ENCODE measurements at regions of chr19 and their contacts with region 1.

Region 1: GRCh38 chr19:18401580-18402112 is 4.2 kb upstream of the LRRC25 start:
- DNase-seq: peak; percentile 99

Region 2: DNA sequence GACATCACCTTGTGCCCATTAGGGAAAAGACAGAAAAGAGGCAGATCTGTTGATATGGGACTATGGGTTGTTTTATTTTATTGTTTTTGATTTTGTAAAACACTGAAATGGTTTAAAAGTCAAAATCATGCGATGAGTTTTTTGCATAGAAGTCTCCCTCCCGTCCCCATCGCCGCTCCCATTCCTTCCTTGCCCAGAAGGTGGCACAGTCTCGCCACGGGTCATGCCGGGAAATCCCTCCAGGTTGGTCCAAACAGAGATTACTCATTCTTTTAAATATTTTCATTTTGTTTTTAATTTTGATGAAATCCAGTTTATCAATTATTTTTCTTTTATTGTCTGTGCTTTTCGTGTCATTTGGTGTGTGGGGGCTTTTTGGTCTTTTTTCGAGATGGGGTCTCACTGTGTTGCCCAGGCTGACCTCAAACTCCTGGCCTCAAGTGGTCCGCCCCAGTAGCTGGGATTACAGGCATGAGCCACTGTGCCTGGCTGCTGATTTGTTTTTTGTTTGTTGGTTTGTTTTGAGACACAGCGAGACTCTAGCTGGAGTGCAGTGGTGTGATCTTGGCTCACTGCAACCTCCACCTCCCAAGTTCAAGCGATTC is 52.0 kb before region 1 on chr19:
- in situ Hi-C with region 1: loop called (anchors 10 kb)
- DNase-seq: peak; percentile 63

Measured in KBM-7 (cell line).